Left ventricle myocardium superior (tissue), 1 donor: ENCODE measurements at regions of chr19 and their contacts with region 1.

Region 1: DNA sequence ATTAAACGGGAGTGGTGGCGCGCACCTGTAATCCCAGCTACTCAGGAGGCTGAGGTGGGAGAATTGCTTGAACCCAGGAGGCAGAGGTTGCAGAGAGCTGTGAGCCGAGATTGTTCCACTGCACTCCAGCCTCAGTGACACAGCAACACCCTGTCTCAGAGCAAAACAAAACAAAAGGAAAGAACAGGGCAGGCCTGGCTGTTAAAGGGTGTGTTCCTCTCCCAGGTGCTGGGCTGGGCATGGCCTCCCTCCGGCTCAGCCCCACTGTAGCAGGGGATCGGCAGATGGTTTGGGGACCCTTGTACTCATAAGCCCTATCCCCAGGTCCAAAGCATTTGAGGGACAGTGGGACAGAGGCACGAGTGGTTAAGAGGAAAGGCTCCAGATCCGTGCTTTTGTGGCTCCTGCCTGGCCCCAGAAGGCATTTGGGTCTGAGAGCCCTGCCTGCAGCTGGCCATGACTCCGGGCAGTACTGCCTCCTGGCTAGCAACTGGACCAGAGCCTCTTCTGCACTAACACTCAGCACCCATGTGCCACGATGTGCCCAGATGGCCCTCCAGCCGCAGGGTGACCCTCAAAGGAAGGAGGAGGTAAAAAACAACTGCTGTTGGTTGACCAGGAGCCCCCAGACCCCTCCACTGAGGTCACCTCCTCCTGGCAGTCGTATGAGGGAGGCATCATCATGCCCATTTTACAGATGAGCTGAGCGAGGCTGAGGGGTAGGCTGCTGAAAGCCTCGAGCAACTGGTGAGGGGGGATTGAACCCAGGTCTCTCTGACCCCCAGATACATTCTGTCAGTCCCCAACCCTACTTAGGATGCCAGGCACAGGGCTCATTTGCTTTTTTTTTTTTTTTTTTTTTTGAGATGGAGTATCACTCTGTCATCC is 10.0 kb downstream of the RFX1 start:
- DNase-seq: peak; percentile 10
- ATAC-seq: no peak

Region 2: DNA sequence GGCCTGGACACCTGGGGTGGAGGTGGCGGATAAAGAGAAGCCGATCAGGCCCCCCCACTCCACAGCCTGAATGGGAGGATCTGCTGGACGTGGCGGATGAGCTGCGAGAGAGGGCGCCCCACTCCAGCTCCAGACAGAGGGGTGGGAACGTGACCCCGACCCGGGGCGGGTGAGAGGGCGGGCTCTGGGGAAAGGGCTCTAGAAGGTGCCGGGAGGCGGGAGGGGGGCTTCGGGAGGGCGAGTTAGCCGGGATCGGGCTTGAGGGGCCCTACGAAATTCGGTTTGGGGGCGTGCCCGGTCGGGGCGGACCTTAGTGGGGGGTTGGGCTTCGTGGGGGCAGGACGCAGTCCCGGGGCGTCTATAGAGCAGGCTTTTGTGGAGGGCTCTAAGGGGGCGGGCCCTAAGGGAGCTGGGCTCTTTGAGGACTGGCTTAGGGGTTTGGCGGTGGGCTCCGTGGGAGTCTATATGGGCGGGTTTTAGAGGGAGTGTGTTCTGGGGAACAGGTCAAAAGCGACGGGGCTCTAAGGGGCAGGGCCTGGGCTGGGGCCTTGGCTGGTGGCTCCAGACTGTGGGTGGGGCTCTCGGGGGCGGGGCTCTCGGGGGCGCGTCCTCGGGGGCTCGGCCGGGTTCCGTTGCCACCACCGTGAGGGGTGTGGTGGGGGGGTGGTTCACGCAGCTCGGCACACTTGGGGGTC is 123.3 kb before region 1 on chr19:
- intact Hi-C with region 1: no loop called
- DNase-seq: peak; percentile 51
- ATAC-seq: peak; percentile 68

Region 3: GRCh38 chr19:13899393-13899792 is 96.7 kb before region 1 on chr19:
- intact Hi-C with region 1: no loop called
- DNase-seq: no peak
- ATAC-seq: no peak

Region 4: GRCh38 chr19:13952154-13953035 is 43.7 kb before region 1 on chr19 and contains the start of gene DCAF15:
- intact Hi-C with region 1: loop called (anchors 2 kb)
- DNase-seq: peak; percentile 99
- ATAC-seq: peak; percentile 98
- total RNA-seq, gene DCAF15: 18.2 TPM